CD14-positive monocyte (primary cell): ENCODE measurements at regions of chr6 and their contacts with region 1.

Region 1: DNA sequence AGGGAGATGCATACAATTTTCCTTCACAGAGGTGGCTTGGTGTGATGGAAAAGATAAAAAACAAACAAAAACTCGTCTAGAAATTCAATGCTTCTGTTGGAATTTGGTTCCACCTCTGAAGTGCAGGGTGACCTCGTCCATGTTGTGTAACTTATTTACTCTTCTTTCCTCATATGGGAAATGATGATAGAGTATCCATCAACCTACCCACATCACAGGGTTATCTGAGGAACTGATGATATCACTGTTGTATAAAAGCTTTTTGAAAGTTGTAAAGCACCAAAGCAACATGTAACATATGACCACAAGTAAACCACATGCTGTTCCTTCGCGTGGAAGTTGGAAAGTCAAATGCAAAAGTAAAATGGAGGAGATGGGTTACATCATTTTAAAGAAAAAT is 212.0 kb upstream of the SGK1 start:
- DNase-seq: peak; percentile 78 to 87 (median 82)
- H3K4me3 ChIP-seq: no peak overlapping the region
- H3K4me3 Mint-ChIP-seq: no peak overlapping the region
- H3K27ac ChIP-seq: peak overlapping the region in 1 of 2 donors; percentile 1
- H3K27ac Mint-ChIP-seq: peak overlapping the region; percentile 48 to 94 (median 83)
- H3K4me1 ChIP-seq: peaks cover 3 to 5% of the 10 kb centered on the region in 2 donors
- H3K4me1 Mint-ChIP-seq: peaks cover 16% of the 10 kb centered on the region
- H3K27me3 ChIP-seq: no peaks in the 10 kb centered on the region
- H3K27me3 Mint-ChIP-seq: peaks cover 0 to 3% (median 2%) of the 10 kb centered on the region in 3 donors
- CTCF ChIP-seq: no peak

Region 2: DNA sequence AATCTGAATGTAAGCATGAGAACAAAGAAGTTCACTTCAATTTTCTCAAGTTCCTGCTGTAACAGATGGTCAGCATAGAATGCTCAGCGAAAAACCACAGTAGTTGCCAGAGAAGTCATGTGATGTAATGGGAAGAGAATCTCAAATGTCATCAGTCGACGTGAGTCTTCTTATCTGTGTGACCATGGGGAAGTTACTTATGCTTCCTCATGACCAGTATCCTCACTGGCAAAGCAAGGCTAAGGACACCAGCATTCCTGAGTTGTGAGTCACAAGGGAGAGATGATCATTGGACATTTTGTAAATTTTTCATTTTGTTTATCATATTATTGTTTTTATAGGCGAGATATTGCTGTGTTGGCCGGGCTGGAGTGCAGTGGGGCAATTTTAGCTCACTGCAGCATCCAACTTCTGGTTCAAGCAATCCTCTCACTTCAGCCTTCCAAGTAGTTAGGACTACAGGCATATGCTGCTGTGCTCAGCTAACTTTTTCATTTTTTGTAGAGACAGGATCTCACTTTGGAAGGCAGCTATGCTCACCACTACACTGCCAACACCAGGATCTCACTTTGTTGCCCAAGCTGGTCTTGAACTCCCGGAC is 233.9 kb before region 1 on chr6:
- intact Hi-C with region 1: loop called in 1 of 2 experiments (anchors 10 kb)
- DNase-seq: peak; percentile 92 to 99 (median 99)
- H3K4me3 ChIP-seq: peak overlapping the region in 1 of 3 experiments; percentile 10
- H3K4me3 Mint-ChIP-seq: no peak overlapping the region
- H3K27ac ChIP-seq: peak overlapping the region; percentile 94 to 95
- H3K27ac Mint-ChIP-seq: peak overlapping the region; percentile 96 to 100 (median 99)
- H3K4me1 ChIP-seq: peaks cover 27 to 29% of the 10 kb centered on the region in 2 donors
- H3K4me1 Mint-ChIP-seq: peaks cover 32% of the 10 kb centered on the region
- H3K27me3 ChIP-seq: no peaks in the 10 kb centered on the region
- H3K27me3 Mint-ChIP-seq: peaks cover 0 to 2% (median 1%) of the 10 kb centered on the region in 3 donors
- CTCF ChIP-seq: no peak

Region 3: DNA sequence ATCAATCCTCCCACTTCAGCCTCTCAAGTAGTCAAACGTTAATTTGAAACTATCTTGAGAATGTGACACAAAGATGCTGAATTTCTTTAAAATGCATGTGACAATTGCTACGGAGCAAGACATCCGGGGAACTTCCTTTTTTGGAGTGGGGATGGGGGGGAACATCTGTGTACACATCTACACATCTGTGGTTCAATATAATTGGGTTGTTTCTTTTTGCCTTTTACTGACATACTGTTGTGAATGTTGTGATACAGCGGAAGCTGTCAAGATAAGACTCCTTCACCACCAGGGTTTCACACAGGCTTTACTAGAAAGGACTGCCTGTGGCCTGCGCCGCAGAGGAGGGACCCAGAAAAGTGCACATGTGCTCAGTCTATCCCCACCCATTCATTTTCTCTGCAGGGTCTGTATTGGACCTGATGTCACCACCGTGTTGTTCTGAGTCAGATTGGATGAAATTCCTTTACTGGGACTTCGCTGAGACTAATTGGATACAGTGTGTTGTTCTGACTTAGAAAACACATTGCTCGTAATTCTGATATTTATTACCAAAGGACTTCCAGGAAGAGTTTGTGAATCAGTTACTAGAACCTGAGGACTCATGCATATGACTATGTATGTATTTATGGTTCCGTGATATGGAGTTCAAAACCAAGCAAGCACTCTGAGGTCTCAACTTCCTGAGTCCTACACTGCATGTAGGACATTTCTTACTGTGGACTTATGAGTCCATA is 113.3 kb before region 1 on chr6:
- intact Hi-C with region 1: no loop called
- DNase-seq: peak; percentile 29 to 45 (median 38)
- H3K4me3 ChIP-seq: no peak overlapping the region
- H3K4me3 Mint-ChIP-seq: no peak overlapping the region
- H3K27ac ChIP-seq: peak overlapping the region in 1 of 2 donors; percentile 98
- H3K27ac Mint-ChIP-seq: peak overlapping the region in 6 of 7 donors; percentile 56 to 100 (median 94)
- H3K4me1 ChIP-seq: peaks cover 49 to 51% of the 10 kb centered on the region in 2 donors
- H3K4me1 Mint-ChIP-seq: peaks cover 55% of the 10 kb centered on the region
- H3K27me3 ChIP-seq: no peaks in the 10 kb centered on the region
- H3K27me3 Mint-ChIP-seq: peaks cover 2 to 5% (median 2%) of the 10 kb centered on the region in 3 donors
- CTCF ChIP-seq: no peak

Region 4: GRCh38 chr6:134630508-134631121 is 100.7 kb after region 1 on chr6:
- intact Hi-C with region 1: loop called in 1 of 2 experiments (anchors 5 kb)
- DNase-seq: peak; percentile 64 to 81 (median 81)
- H3K4me3 ChIP-seq: no peak overlapping the region
- H3K4me3 Mint-ChIP-seq: peak overlapping the region; percentile 2 to 35
- H3K27ac ChIP-seq: no peak overlapping the region
- H3K27ac Mint-ChIP-seq: peak overlapping the region; percentile 62 to 94 (median 77)
- H3K4me1 ChIP-seq: peaks cover 26 to 44% of the 10 kb centered on the region in 2 donors
- H3K4me1 Mint-ChIP-seq: peaks cover 44% of the 10 kb centered on the region
- H3K27me3 ChIP-seq: no peaks in the 10 kb centered on the region
- H3K27me3 Mint-ChIP-seq: peaks cover 0 to 2% (median 0%) of the 10 kb centered on the region in 3 donors
- CTCF ChIP-seq: no peak